Cardiac septum (tissue), 1 donor: ENCODE measurements at regions of chr19 and their contacts with region 1.

Region 1: GRCh38 chr19:33778089-33778791 is 18.4 kb upstream of the KCTD15 start:
- DNase-seq: peak; percentile 94

Region 2: GRCh38 chr19:33705090-33705847 is 73.0 kb before region 1 on chr19:
- intact Hi-C with region 1: no loop called
- DNase-seq: peak; percentile 35

Region 3: GRCh38 chr19:33998739-33999345 is 220.6 kb after region 1 on chr19:
- intact Hi-C with region 1: loop called (anchors 5 kb)
- DNase-seq: no peak

Region 4: DNA sequence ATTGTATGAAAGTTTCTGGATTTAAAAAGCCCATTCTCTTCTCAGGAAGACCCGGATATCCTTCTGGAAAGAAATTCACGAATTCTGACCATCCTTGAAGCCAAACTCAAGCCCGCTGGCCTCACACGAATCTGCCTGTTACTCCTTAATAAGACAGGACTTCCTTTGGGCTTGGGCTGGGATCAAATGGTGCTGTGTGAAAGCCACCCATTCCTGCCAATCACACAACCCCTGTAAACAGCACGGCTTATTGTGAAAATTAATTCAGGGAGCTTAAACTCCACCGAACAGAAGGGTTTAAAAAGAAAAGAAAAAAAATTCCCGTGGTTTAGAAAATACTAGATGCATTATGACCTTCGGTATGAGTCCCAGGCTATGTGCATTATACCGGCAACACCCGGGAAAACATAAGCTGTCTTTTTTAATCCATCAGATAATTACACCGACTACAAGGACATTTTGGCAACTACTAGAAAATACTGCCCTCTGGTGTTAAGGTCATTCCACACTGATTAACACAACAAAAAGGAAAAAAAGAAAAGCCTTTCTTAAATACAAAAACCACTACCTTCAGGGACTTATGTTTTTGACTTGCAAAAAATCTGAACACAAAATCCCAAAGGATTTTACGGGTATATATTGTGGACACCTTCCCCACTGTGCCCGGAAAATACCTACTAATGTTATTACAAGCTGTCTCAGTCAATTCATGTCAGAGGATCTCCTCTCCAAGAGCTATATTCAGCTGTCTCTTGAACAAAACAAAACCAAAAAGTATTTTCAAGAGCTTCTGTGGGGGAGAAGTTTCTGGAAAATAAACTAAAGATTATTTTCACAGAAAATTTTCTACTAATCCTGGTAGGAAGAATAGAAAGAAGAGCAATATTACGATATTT is 318.0 kb after region 1 on chr19:
- intact Hi-C with region 1: loop called (anchors 1 kb)
- DNase-seq: no peak

Region 5: GRCh38 chr19:34145741-34146202 is 367.5 kb after region 1 on chr19:
- intact Hi-C with region 1: loop called (anchors 2 kb)
- DNase-seq: no peak